Dorsolateral prefrontal cortex (tissue), 120 donors: ENCODE measurements at regions of chr19 and their contacts with region 1.

Region 1: DNA sequence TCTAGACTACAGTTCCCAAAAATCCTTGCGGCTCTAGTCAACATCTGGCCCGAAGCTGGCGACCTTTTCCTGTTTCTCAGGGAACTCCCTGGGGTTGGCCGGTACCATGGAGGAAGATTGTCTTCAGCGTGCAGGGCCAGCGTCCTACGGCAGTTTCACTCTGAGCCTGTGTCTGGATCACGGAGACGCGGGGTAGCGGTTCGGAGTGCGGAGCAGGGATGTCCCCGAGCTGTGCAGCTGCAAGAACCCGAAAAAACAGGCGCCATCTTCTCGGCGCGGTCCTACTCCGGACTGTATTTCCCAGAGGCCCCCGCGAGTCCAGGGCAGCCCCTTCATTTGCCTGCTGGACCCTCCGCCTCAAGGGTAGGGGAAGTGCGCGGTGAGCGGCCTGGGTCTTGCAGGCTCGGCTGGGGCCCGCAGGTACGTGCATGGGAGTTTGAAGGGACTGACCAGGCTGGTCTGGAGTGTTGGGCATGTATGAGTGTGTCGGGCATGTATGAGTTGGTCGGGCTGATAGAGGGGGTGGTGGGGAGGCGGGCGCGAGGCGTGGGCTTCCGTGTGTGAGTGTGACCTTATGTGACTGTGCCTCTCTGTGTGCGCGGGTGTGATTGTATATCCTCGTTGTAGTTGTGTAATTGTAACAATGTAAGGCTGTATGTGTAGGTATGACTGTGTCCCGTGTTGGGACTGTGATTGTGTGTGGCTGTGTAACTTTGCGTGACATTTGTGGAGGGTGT is at the start of gene ZNF383:
- DNase-seq: peak; percentile 83 to 93 (median 90)
- H3K4me3 ChIP-seq: peak within 1 kb of the TSS; percentile 62 to 96 (median 85)
- H3K27ac ChIP-seq: peak within 1 kb of the TSS; percentile 91 to 100 (median 98)
- H3K27me3 ChIP-seq: no peaks in the 10 kb centered on the region
- CTCF ChIP-seq: peak in 19 of 56 donors; percentile 4 to 43 (median 17)
- total RNA-seq, gene ZNF383: 9.7 to 27.7 (median 16.2) TPM

Region 2: GRCh38 chr19:36973021-36973843 is 244.8 kb before region 1 on chr19:
- intact Hi-C with region 1: loop called (anchors 1 to 5 kb)
- DNase-seq: peak; percentile 77 to 93 (median 87)
- H3K4me3 ChIP-seq: peak overlapping the region; percentile 50 to 91 (median 79)
- H3K27ac ChIP-seq: peak overlapping the region in 58 of 59 donors; percentile 29 to 93 (median 83)
- H3K27me3 ChIP-seq: no peaks in the 10 kb centered on the region
- CTCF ChIP-seq: peak; percentile 52 to 100 (median 86)

Region 3: DNA sequence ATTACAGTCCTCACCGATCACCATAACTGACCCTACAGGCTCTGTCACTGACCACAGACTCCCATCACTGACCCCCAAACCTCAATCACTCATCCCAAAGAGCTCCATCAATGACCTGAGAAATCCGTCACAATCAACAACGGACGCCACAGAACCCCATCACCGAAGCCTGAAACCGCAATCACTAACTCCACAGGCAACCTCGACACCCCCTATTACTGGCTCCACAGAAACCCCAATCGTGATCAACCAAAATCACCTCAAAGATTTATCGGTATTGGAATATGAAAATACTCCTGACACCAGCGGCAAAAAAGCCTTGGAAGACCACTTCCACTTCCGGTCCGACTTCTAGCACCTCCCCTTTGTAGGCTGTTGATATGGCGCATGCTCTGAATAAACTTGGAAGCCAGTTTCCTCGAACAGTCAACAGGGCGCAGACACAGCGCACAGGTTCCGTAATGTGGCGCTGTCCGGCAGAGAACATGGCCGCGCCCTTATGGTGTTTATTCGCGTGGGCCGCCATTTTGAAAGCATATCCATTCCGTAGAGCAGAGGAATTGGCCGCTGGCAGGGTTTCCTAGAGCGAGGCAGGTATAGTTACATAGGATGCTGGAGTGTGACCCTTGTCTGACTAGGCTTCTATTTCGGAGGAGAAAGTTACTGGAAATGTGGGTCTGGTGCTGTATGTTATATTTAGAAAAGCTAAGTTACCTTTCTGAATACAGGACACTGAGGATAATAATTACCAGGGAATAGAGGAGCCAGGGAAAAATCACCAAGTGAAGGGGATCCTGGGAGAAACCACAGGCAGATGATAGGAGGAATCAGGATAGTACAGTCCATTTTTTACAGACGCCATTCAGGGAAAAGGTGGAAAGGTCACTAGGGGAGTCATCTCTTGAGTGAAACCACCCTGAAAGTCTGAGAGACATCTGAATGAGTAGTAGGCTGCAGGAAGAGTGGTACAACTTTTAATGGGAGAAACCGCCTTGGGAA is 45.4 kb before region 1 on chr19 and contains the start of gene ZNF585A:
- intact Hi-C with region 1: loop called in 1 of 2 experiments (anchors 5 kb)
- DNase-seq: peak; percentile 85 to 98 (median 94)
- H3K4me3 ChIP-seq: peak within 1 kb of the TSS; percentile 39 to 95 (median 78)
- H3K27ac ChIP-seq: peak within 1 kb of the TSS in 54 of 59 donors; percentile 19 to 85 (median 68)
- H3K27me3 ChIP-seq: no peaks in the 10 kb centered on the region
- CTCF ChIP-seq: peak in 55 of 56 donors; percentile 18 to 76 (median 56)
- total RNA-seq, gene ZNF585A: 13.4 to 28.1 (median 20.6) TPM

Region 4: DNA sequence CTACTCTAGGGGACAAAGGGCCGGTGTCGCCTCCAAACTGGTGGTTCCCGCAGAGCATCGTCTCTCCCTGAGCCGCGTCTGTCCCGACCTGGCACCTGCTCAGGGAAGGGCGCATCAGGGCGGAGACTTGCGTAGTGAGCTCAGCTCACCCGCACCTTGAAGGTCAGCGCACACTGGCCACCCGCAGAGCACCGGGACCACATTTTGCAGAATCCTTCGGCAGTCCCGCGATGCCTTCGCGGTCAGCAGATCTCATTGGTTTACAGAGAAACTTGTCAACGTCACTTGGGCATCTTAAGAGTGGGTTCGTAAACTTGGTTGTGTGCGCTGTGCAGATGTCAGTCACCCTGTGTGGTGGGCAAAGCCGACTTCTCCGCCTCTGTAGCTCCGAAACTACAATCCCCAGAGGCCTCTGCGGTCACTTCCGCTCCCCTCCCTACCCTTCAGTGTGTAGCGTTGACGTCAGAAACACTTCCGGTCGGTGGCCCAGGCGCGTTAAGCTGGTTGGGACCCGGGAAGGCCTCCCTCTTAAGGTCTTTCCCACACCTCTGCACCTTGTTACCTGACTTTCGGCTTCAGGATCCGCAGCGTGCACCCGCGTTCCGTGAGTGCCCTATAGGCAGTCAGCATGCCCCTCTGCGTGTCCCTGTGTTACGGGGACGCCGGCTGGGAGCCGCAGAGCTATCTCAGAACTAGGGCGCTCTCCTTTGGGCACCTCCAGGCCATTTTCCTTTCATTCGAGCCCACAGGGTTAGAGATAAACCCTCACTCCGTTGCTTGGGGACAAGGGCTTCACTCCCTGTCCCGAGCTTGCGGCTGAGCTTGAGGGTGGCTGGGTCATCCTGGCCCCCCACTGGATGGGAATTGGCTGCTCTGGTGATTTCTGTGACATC is 116.4 kb after region 1 on chr19:
- intact Hi-C with region 1: loop called in 1 of 2 experiments (anchors 10 kb)
- DNase-seq: peak; percentile 96 to 98 (median 98)
- H3K4me3 ChIP-seq: peak overlapping the region; percentile 61 to 100 (median 91)
- H3K27ac ChIP-seq: peak overlapping the region in 56 of 59 donors; percentile 0 to 91 (median 76)
- H3K27me3 ChIP-seq: no peaks in the 10 kb centered on the region
- CTCF ChIP-seq: peak in 19 of 56 donors; percentile 4 to 39 (median 23)